ENCODE measurements at regions of chr11 and their contacts with region 1.

Region 1: GRCh38 chr11:4636962-4637661 is at the start of gene OR51D1:
- DNase-seq: peak; percentile 84
- ATAC-seq: peak; percentile 99
- H3K4me3 Mint-ChIP-seq: no peak within 1 kb of the TSS
- H3K27ac Mint-ChIP-seq: no peak within 1 kb of the TSS
- H3K4me1 Mint-ChIP-seq: no peaks in the 10 kb centered on the region
- H3K27me3 Mint-ChIP-seq: peaks cover 9% of the 10 kb centered on the region
- total RNA-seq, gene OR51D1: not detected

Region 2: GRCh38 chr11:4626207-4627099 is 10.7 kb before region 1 on chr11:
- CTCF ChIA-PET with region 1: interaction called, 44 read pairs
- POLR2A ChIA-PET with region 1: no interaction called
- intact Hi-C with region 1: no loop called
- DNase-seq: peak; percentile 81
- ATAC-seq: peak; percentile 42
- H3K4me3 Mint-ChIP-seq: no peak overlapping the region
- H3K27ac Mint-ChIP-seq: no peak overlapping the region
- H3K4me1 Mint-ChIP-seq: no peaks in the 10 kb centered on the region
- H3K27me3 Mint-ChIP-seq: peaks cover 38% of the 10 kb centered on the region

Region 3: GRCh38 chr11:4826425-4826824 is 189.3 kb after region 1 on chr11:
- CTCF ChIA-PET with region 1: no interaction called
- POLR2A ChIA-PET with region 1: no interaction called
- intact Hi-C with region 1: loop called in 1 of 2 experiments (anchors 1 kb)
- DNase-seq: no peak
- ATAC-seq: no peak
- H3K4me3 Mint-ChIP-seq: no peak overlapping the region
- H3K27ac Mint-ChIP-seq: no peak overlapping the region
- H3K4me1 Mint-ChIP-seq: no peaks in the 10 kb centered on the region
- H3K27me3 Mint-ChIP-seq: peaks cover 11% of the 10 kb centered on the region

Region 4: DNA sequence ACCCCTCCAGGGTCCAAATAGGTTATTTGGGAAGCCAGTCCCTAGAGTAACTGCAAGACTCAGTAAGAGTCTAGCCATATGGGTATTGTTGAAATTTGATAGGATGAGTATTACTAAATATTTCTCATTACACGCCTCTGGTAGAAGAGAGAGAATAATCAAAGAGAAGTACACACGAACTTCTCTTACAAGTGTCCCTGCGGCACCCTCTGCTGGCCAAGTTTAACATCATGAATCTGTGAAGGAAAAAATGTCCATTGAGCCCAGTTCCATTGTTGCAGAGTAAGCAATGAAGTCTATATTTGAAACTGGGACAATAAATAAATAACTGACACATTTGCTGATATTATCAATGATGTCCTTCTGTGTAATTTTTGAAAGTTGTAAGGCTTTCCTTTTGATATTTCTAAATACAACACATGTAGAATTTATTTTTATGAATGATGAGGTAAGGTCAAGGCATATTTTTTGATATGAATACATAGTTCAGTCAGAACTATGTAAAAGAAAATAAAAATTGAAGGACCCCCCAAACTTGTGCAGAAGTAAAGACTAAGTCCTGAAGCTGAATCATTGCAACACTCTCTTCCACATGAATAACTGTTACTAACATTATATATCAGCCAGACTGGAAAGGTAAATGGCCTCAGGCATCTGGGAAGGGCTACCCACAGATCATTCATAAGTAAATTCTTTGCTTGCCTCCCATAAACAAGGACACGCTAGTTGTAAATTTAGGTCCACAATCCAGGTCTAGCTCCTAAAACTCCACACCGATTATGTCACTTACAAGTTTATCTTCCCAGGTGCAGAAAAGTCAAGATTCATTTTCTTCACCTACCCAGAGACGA is 367.5 kb after region 1 on chr11:
- CTCF ChIA-PET with region 1: no interaction called
- POLR2A ChIA-PET with region 1: no interaction called
- intact Hi-C with region 1: loop called (anchors 1 kb)
- DNase-seq: peak; percentile 60
- ATAC-seq: no peak
- H3K4me3 Mint-ChIP-seq: no peak overlapping the region
- H3K27ac Mint-ChIP-seq: no peak overlapping the region
- H3K4me1 Mint-ChIP-seq: no peaks in the 10 kb centered on the region
- H3K27me3 Mint-ChIP-seq: peaks cover 3% of the 10 kb centered on the region

Region 5: DNA sequence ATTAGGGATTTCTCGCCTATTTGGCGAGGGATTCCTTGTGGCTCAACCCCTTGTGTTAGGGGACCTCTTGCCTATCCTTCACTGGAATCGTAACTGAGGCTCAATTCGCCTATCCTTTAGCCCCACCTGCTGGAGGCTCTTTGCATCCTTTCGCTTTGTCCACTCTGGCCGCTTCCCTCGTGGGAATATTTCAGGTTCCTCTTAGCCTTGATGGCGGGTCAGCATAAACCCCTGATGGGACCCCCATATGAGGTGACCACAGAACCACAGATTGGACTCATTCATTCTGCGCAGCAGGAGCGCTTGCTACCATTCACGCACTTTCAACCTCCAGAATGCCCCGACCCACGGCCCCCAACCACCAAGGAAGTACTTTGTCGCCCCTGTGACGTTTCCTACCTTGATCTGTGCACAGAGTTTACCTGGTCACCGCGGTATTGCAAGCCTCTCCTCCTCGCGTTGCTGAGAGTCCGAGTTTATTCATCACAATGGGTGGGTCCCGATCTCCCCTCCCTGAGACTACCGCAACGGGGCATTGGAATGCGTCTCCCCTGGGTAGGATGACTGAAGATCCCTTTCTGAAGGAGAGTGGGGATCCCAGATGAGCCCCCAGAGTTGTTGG is 1171.5 kb after region 1 on chr11 and contains the start of gene OR52N2:
- CTCF ChIA-PET with region 1: no interaction called
- POLR2A ChIA-PET with region 1: no interaction called
- intact Hi-C with region 1: loop called (anchors 5 to 10 kb)
- DNase-seq: peak; percentile 82
- ATAC-seq: peak; percentile 92
- H3K4me3 Mint-ChIP-seq: peak within 1 kb of the TSS; percentile 79
- H3K27ac Mint-ChIP-seq: peak within 1 kb of the TSS; percentile 23
- H3K4me1 Mint-ChIP-seq: peaks cover 8% of the 10 kb centered on the region
- H3K27me3 Mint-ChIP-seq: peaks cover 16% of the 10 kb centered on the region
- total RNA-seq, gene OR52N2: not detected